ENCODE measurements at regions of chr11 and their contacts with region 1.

Region 1: DNA sequence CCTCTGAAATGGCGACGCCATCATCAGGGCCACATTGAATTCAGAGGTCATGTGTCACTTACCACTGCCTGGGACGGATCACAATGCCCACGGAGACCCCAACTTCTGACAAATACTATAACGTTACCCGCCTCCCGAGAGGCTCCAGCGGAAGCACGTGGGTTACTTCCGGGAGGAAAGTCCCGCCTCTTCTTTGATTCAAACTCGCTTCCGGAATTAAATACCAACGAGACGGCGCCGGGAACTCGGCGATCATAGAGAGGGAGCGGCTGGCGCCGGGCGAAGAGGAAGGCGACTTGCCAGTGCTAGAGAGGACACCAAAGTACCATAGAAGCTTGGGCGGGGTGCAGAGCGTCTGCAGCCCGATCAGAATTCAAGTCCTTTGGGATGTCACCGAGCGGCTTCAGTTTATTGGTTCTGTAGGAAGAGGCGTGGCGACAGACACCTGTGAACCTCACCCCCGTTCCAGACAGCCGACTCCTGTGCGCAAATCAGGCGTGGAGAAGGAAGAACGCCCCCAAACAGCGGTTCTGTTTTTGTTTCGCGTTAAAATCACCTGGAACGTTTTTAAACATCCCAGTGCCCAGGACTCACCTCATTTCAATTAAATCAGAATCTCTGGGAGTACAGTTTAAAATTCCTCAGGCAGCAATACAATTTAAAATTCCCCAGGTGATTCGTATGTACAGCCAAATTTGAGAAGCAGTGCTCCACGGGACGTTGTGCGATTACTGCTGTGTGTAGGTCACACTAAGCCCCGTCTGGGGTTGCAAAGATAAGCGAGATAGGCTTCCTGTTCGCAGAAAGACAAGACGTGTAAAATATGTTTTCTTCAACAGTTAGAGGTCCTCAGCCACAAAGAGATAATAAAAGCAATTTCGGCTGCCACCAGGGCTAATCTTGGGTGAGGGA is at the start of gene TIMM10:
- DNase-seq: peak; percentile 87 to 98
- H3K4me3 ChIP-seq: peak within 1 kb of the TSS; percentile 88 to 99 (median 96)
- H3K27ac ChIP-seq: peak within 1 kb of the TSS; percentile 49
- H3K4me1 ChIP-seq: peaks cover 0 to 7% (median 3%) of the 10 kb centered on the region in 4 experiments; a peak in 4 of 7 replicates
- H3K27me3 ChIP-seq: no peaks in the 10 kb centered on the region
- CTCF ChIP-seq: no peak
- EP300 ChIP-seq: peak in 1 of 2 experiments; percentile 26; a peak in 1 of 3 replicates
- POLR2A ChIP-seq: peak in 1 of 2 experiments; percentile 65; a peak in 1 of 3 replicates
- RAD21 ChIP-seq: peak in 1 of 2 experiments; percentile 13; a peak in 1 of 4 replicates
- total RNA-seq, gene TIMM10: 109 and 117 TPM in 2 replicates

Region 2: GRCh38 chr11:57456960-57457642 is 73.8 kb before region 1 on chr11:
- CTCF ChIA-PET with region 1: interaction called, 142 read pairs
- POLR2A ChIA-PET with region 1: interaction called, 57 read pairs
- DNase-seq: peak in 1 of 2 experiments; percentile 97
- H3K4me3 ChIP-seq: peak overlapping the region; percentile 62 to 97 (median 74); a peak in 7 of 8 replicates
- H3K27ac ChIP-seq: no peak overlapping the region
- H3K4me1 ChIP-seq: peaks cover 0 to 20% (median 11%) of the 10 kb centered on the region in 4 experiments; a peak in 6 of 7 replicates
- H3K27me3 ChIP-seq: peaks cover 8 to 30% (median 23%) of the 10 kb centered on the region in 4 experiments
- CTCF ChIP-seq: peak; percentile 92 to 97 (median 95)
- EP300 ChIP-seq: peak in 1 of 2 experiments; percentile 60; a peak in 1 of 3 replicates
- POLR2A ChIP-seq: no peak
- RAD21 ChIP-seq: peak; percentile 89 to 93

Region 3: GRCh38 chr11:57493507-57494503 is 37.0 kb before region 1 on chr11:
- CTCF ChIA-PET with region 1: interaction called, 1,146 read pairs
- POLR2A ChIA-PET with region 1: interaction called, 40 read pairs
- DNase-seq: peak; percentile 88 to 93
- H3K4me3 ChIP-seq: no peak overlapping the region
- H3K27ac ChIP-seq: peak overlapping the region; percentile 88
- H3K4me1 ChIP-seq: peaks cover 0 to 7% (median 5%) of the 10 kb centered on the region in 4 experiments; a peak in 4 of 7 replicates
- H3K27me3 ChIP-seq: no peaks in the 10 kb centered on the region
- CTCF ChIP-seq: peak; percentile 81 to 90 (median 87)
- EP300 ChIP-seq: peak in 1 of 2 experiments; percentile 81; a peak in 1 of 3 replicates
- POLR2A ChIP-seq: peak in 1 of 2 experiments; percentile 36; a peak in 1 of 3 replicates
- RAD21 ChIP-seq: peak; percentile 63 to 74

Region 4: GRCh38 chr11:57515332-57516060 is 15.4 kb before region 1 on chr11 and contains the start of gene SLC43A1:
- CTCF ChIA-PET with region 1: interaction called, 161 read pairs
- POLR2A ChIA-PET with region 1: interaction called, 110 read pairs
- DNase-seq: peak in 1 of 2 experiments; percentile 66
- H3K4me3 ChIP-seq: peak within 1 kb of the TSS; percentile 49 to 76 (median 68)
- H3K27ac ChIP-seq: no peak within 1 kb of the TSS
- H3K4me1 ChIP-seq: peaks cover 3 to 10% (median 5%) of the 10 kb centered on the region in 4 experiments
- H3K27me3 ChIP-seq: peaks cover 0 to 21% (median 10%) of the 10 kb centered on the region in 4 experiments; a peak in 4 of 7 replicates
- CTCF ChIP-seq: no peak
- EP300 ChIP-seq: no peak
- POLR2A ChIP-seq: no peak; a peak in 1 of 3 replicates
- RAD21 ChIP-seq: 0 out of 4 replicates have a peak, but pooled peaks of 1 of the 2 experiments have one; percentile 0
- total RNA-seq, gene SLC43A1: 30.1 and 34.5 TPM in 2 replicates

Region 5: GRCh38 chr11:57556061-57556460 is 25.2 kb after region 1 on chr11:
- CTCF ChIA-PET with region 1: interaction called, 41 read pairs
- POLR2A ChIA-PET with region 1: no interaction called
- DNase-seq: no peak
- H3K4me3 ChIP-seq: no peak overlapping the region
- H3K27ac ChIP-seq: no peak overlapping the region
- H3K4me1 ChIP-seq: peaks cover 0 to 3% (median 2%) of the 10 kb centered on the region in 4 experiments; a peak in 2 of 7 replicates
- H3K27me3 ChIP-seq: no peaks in the 10 kb centered on the region
- CTCF ChIP-seq: no peak
- EP300 ChIP-seq: no peak
- POLR2A ChIP-seq: no peak
- RAD21 ChIP-seq: no peak

Region 6: GRCh38 chr11:57567515-57568329 is 36.9 kb after region 1 on chr11 and contains the start of gene UBE2L6:
- CTCF ChIA-PET with region 1: interaction called, 41 read pairs
- POLR2A ChIA-PET with region 1: interaction called, 3 read pairs
- DNase-seq: peak in 1 of 2 experiments; percentile 80
- H3K4me3 ChIP-seq: peak within 1 kb of the TSS; percentile 41 to 89 (median 83)
- H3K27ac ChIP-seq: peak within 1 kb of the TSS; percentile 78; the same call in 1 of the 2 replicates
- H3K4me1 ChIP-seq: peaks cover 0 to 11% (median 4%) of the 10 kb centered on the region in 4 experiments; a peak in 6 of 7 replicates
- H3K27me3 ChIP-seq: no peaks in the 10 kb centered on the region
- CTCF ChIP-seq: peak in 2 of 3 experiments; percentile 48 to 50; a peak in 3 of 4 replicates
- EP300 ChIP-seq: no peak
- POLR2A ChIP-seq: peak; percentile 65 to 81
- RAD21 ChIP-seq: peak in 1 of 2 experiments; percentile 26; a peak in 2 of 4 replicates
- total RNA-seq, gene UBE2L6: 67.8 and 68.1 TPM in 2 replicates

Region 7: DNA sequence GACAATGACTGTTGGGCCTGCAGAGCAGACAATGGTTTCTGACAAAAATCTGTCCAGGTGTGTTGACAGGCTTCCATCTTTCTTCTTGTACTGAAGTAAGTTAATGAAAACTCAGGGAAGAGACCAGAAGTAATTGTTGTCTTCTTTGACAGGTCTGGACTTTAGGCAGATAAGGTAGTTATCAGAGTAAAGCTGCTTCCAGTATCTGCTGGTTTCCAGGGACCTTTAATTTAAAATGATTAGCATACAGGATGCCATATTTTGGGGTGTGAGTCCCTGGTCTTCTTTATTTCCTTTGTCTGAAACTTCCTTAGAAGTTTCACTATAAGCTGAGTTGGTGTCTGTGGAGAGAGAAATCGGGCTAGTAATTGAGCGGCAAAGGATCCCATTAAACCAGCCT is 183.0 kb after region 1 on chr11:
- CTCF ChIA-PET with region 1: no interaction called
- POLR2A ChIA-PET with region 1: no interaction called
- DNase-seq: no peak
- H3K4me3 ChIP-seq: peak overlapping the region; percentile 91 to 100 (median 98); a peak in 5 of 8 replicates
- H3K27ac ChIP-seq: no peak overlapping the region
- H3K4me1 ChIP-seq: peaks cover 0 to 4% (median 0%) of the 10 kb centered on the region in 4 experiments; a peak in 1 of 7 replicates
- H3K27me3 ChIP-seq: no peaks in the 10 kb centered on the region
- CTCF ChIP-seq: no peak
- EP300 ChIP-seq: no peak
- POLR2A ChIP-seq: no peak
- RAD21 ChIP-seq: no peak

Region 8: GRCh38 chr11:57834852-57835251 is 304.0 kb after region 1 on chr11:
- CTCF ChIA-PET with region 1: no interaction called
- POLR2A ChIA-PET with region 1: no interaction called
- DNase-seq: no peak
- H3K4me3 ChIP-seq: no peak overlapping the region
- H3K27ac ChIP-seq: no peak overlapping the region
- H3K4me1 ChIP-seq: peaks cover 0 to 3% (median 0%) of the 10 kb centered on the region in 4 experiments; a peak in 1 of 7 replicates
- H3K27me3 ChIP-seq: no peaks in the 10 kb centered on the region
- CTCF ChIP-seq: no peak
- EP300 ChIP-seq: no peak
- POLR2A ChIP-seq: no peak
- RAD21 ChIP-seq: no peak

Measured in H1 (cell line).